Gastrocnemius medialis (tissue), 4 donors: ENCODE measurements at regions of chr3 and their contacts with region 1.

Region 1: GRCh38 chr3:14467814-14468620 is 65.6 kb downstream of the SLC6A6 start:
- DNase-seq: no peak
- ATAC-seq: peak; percentile 32 to 59
- H3K4me3 ChIP-seq: no peak overlapping the region
- H3K27ac ChIP-seq: no peak overlapping the region
- H3K4me1 ChIP-seq: peaks cover 0 to 2% of the 10 kb centered on the region in 2 donors
- H3K27me3 ChIP-seq: no peaks in the 10 kb centered on the region
- CTCF ChIP-seq: peak; percentile 92 to 98 (median 97)
- POLR2A ChIP-seq: no peak

Region 2: GRCh38 chr3:12663936-12664908 is 1803.8 kb before region 1 on chr3 and contains the start of gene RAF1:
- in situ Hi-C with region 1: no loop called
- intact Hi-C with region 1: loop called (anchors 5 kb)
- DNase-seq: peak; percentile 97 to 99
- ATAC-seq: peak; percentile 76 to 83
- H3K4me3 ChIP-seq: peak within 1 kb of the TSS; percentile 96 to 100 (median 98)
- H3K27ac ChIP-seq: peak within 1 kb of the TSS; percentile 99 to 100 (median 100)
- H3K4me1 ChIP-seq: peaks cover 29 to 37% of the 10 kb centered on the region in 2 donors
- H3K27me3 ChIP-seq: no peaks in the 10 kb centered on the region
- CTCF ChIP-seq: no peak
- POLR2A ChIP-seq: peak; percentile 87 to 95
- total RNA-seq, gene RAF1: 212 to 346 (median 246) TPM

Region 3: DNA sequence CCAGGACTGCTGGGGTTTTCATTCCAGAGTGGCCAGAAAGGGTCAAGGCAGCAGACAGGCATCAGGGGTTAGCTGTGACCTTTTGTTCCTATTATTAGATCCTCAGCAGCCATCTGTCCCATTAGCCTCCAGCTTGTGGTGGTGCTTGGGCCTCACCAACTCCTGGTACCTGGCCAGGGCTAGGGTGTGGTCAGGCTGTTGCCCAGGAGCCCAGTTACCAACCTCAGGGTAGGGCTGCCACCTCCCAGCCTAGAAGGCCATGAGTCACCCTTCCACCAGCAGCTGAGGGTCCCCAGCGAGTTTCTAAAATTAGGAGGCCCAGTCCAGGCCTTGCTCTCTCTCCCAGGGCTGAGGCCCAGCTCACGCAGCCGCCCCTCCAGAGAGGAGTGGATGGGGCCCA is 331.0 kb before region 1 on chr3:
- in situ Hi-C with region 1: no loop called
- intact Hi-C with region 1: no loop called
- DNase-seq: peak; percentile 95 to 99
- ATAC-seq: peak; percentile 84 to 86
- H3K4me3 ChIP-seq: no peak overlapping the region
- H3K27ac ChIP-seq: peak overlapping the region; percentile 89 to 97 (median 93)
- H3K4me1 ChIP-seq: peaks cover 19 to 37% of the 10 kb centered on the region in 2 donors
- H3K27me3 ChIP-seq: no peaks in the 10 kb centered on the region
- CTCF ChIP-seq: no peak
- POLR2A ChIP-seq: no peak

Region 4: GRCh38 chr3:14261229-14261628 is 206.8 kb before region 1 on chr3:
- in situ Hi-C with region 1: loop called (anchors 5 kb)
- intact Hi-C with region 1: loop called (anchors 1 kb)
- DNase-seq: peak; percentile 73 to 85
- ATAC-seq: peak; percentile 86 to 89
- H3K4me3 ChIP-seq: no peak overlapping the region
- H3K27ac ChIP-seq: no peak overlapping the region
- H3K4me1 ChIP-seq: peaks cover 2 to 9% of the 10 kb centered on the region in 2 donors
- H3K27me3 ChIP-seq: no peaks in the 10 kb centered on the region
- CTCF ChIP-seq: peak; percentile 94 to 99 (median 97)
- POLR2A ChIP-seq: no peak